Left cardiac atrium (tissue), 4 donors: ENCODE measurements at regions of chr4 and their contacts with region 1.

Region 1: GRCh38 chr4:107930821-107931774 is at the start of gene CYP2U1:
- DNase-seq: peak; percentile 91
- ATAC-seq: peak; percentile 98 to 99
- total RNA-seq, gene CYP2U1: 9.4 to 10.8 TPM

Region 2: DNA sequence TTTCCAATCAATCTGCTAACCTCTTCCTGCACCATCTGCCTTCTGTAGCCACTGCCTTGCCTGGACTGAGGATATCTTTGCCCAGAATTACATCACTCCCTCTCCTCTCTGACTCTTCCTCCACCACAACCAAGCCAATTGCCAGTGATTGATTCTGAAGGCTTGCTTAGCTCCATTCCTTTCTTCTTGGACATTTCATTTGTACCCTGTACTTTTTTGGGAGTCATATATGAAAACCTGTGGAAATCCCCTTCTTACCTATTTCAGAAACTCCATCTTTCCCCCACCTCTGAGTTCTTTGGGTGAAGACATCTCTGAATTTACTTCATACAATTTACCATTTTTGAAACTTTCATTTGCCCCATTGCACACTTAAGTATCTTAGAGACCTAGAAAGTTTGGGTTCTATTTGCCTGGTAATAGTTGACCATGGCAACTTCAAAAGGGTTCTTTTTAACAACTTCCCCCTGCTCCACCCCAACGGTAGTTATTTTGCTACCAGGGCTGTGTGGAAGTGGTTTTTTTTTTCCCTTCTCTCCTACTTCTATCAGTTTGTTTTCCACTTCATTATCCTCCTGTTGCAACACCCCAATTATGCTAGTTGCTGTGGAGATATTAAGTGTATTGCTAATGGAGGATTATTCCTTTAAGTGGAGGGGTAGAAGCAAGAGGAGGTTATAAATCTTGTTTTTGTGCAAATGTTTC is 92.1 kb before region 1 on chr4:
- intact Hi-C with region 1: no loop called
- DNase-seq: no peak
- ATAC-seq: peak in 1 of 2 donors; percentile 63

Region 3: DNA sequence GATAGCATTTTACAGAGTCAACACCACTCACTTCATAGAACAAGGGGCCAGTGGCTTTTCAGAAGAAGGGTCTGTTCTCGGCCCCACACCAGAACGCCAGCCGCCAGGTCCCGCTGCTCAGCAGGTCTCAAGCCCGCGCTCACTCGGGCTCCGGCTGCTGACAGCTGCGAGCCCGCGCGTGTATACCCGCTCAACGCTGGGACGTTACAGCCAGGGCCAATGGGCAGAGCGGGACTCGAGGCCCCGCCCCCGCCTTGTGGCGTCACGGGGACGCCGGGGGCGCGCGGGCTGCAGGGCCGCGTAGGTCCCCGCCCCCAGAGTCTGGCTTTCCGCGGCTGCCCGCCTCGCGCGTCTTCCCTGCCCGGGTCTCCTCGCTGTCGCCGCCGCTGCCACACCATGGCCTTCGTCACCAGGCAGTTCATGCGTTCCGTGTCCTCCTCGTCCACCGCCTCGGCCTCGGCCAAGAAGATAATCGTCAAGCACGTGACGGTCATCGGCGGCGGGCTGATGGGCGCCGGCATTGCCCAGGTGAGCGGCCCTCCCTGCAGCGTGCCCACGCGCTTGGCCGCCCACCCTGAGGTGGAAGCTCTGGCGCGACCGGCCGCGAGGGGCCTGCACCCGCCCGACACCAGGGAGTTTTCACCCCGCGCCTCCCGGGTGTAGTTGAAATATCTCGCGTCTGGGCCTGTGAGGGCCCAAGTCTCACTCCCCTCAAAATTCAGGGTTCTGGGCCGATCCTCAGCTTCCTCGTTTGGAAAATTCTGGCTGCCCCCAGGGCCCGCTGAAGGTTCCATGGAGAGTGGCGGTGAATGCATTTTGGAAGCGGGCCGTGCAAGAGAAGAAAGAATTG is 58.7 kb after region 1 on chr4 and contains the start of gene HADH:
- intact Hi-C with region 1: loop called in 1 of 2 experiments (anchors 5 kb)
- DNase-seq: peak; percentile 96
- ATAC-seq: peak; percentile 100
- total RNA-seq, gene HADH: 103 to 132 TPM